ENCODE measurements at regions of chr11 and their contacts with region 1.

Region 1: GRCh38 chr11:128172046-128172878 is 415.1 kb downstream of the ETS1 start:
- DNase-seq: peak; percentile 74
- ATAC-seq: peak; percentile 85
- H3K4me3 ChIP-seq: no peak overlapping the region
- H3K27ac ChIP-seq: no peak overlapping the region
- H3K4me1 ChIP-seq: no peaks in the 10 kb centered on the region
- H3K27me3 ChIP-seq: peaks cover 15% of the 10 kb centered on the region
- CTCF ChIP-seq: peak; percentile 65 to 83 (median 77)
- POLR2A ChIP-seq: no peak
- RAD21 ChIP-seq: peak; percentile 91

Region 2: GRCh38 chr11:128157423-128158298 is 14.6 kb before region 1 on chr11:
- CTCF ChIA-PET with region 1: interaction called, 53 read pairs
- POLR2A ChIA-PET with region 1: no interaction called
- RAD21 ChIA-PET with region 1: interaction called in 1 of 2 experiments, 4 read pairs
- intact Hi-C with region 1: no loop called
- DNase-seq: peak; percentile 72
- ATAC-seq: peak; percentile 90
- H3K4me3 ChIP-seq: no peak overlapping the region
- H3K27ac ChIP-seq: no peak overlapping the region
- H3K4me1 ChIP-seq: no peaks in the 10 kb centered on the region; a peak in 1 of 4 replicates
- H3K27me3 ChIP-seq: peaks cover 18% of the 10 kb centered on the region; the same call in 1 of the 2 replicates
- CTCF ChIP-seq: peak; percentile 73 to 99 (median 94)
- POLR2A ChIP-seq: no peak
- RAD21 ChIP-seq: peak; percentile 78

Region 3: DNA sequence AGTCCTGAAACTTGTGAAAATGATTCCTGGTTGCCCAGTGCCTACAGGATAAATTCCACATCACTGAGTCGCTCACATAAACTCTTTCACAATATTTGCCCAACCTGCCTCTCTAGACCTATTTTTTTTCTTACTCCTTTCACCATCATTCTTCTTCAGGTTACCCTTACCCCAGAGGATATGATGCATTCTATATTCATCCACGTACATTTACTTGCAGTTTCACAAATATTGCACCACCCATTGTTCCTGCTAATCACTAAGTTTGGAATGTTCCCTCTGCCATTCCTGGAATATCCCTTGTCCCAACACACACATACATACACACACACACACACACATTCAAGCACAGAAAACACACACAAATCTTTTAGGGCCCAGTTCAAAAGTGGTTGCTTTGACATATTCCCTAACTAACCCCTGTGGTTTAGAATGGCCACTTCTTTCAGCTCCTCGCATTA is 35.6 kb after region 1 on chr11:
- CTCF ChIA-PET with region 1: no interaction called
- POLR2A ChIA-PET with region 1: no interaction called
- RAD21 ChIA-PET with region 1: no interaction called
- intact Hi-C with region 1: no loop called
- DNase-seq: peak; percentile 77
- ATAC-seq: peak; percentile 35
- H3K4me3 ChIP-seq: peak overlapping the region in 1 of 2 experiments; percentile 17; a peak in 1 of 4 replicates
- H3K27ac ChIP-seq: no peak overlapping the region
- H3K4me1 ChIP-seq: peaks cover 38 to 51% of the 10 kb centered on the region in 2 experiments
- H3K27me3 ChIP-seq: no peaks in the 10 kb centered on the region
- CTCF ChIP-seq: no peak
- POLR2A ChIP-seq: no peak
- RAD21 ChIP-seq: peak; percentile 21; the same call in 1 of the 2 replicates

Region 4: GRCh38 chr11:128238521-128239265 is 66.4 kb after region 1 on chr11:
- CTCF ChIA-PET with region 1: no interaction called
- POLR2A ChIA-PET with region 1: no interaction called
- RAD21 ChIA-PET with region 1: no interaction called
- intact Hi-C with region 1: no loop called
- DNase-seq: no peak
- ATAC-seq: no peak
- H3K4me3 ChIP-seq: no peak overlapping the region
- H3K27ac ChIP-seq: no peak overlapping the region
- H3K4me1 ChIP-seq: no peaks in the 10 kb centered on the region
- H3K27me3 ChIP-seq: no peaks in the 10 kb centered on the region
- CTCF ChIP-seq: no peak
- POLR2A ChIP-seq: no peak
- RAD21 ChIP-seq: no peak

Region 5: GRCh38 chr11:128630367-128631230 is 458.3 kb after region 1 on chr11:
- CTCF ChIA-PET with region 1: interaction called, 80 read pairs
- POLR2A ChIA-PET with region 1: no interaction called
- RAD21 ChIA-PET with region 1: interaction called, 3 to 4 read pairs
- intact Hi-C with region 1: loop called (anchors 1 kb)
- DNase-seq: peak; percentile 56
- ATAC-seq: peak; percentile 87
- H3K4me3 ChIP-seq: no peak overlapping the region
- H3K27ac ChIP-seq: no peak overlapping the region
- H3K4me1 ChIP-seq: no peaks in the 10 kb centered on the region
- H3K27me3 ChIP-seq: no peaks in the 10 kb centered on the region; the same call in 1 of the 2 replicates
- CTCF ChIP-seq: peak; percentile 79 to 95 (median 89)
- POLR2A ChIP-seq: no peak
- RAD21 ChIP-seq: peak; percentile 93

Region 6: DNA sequence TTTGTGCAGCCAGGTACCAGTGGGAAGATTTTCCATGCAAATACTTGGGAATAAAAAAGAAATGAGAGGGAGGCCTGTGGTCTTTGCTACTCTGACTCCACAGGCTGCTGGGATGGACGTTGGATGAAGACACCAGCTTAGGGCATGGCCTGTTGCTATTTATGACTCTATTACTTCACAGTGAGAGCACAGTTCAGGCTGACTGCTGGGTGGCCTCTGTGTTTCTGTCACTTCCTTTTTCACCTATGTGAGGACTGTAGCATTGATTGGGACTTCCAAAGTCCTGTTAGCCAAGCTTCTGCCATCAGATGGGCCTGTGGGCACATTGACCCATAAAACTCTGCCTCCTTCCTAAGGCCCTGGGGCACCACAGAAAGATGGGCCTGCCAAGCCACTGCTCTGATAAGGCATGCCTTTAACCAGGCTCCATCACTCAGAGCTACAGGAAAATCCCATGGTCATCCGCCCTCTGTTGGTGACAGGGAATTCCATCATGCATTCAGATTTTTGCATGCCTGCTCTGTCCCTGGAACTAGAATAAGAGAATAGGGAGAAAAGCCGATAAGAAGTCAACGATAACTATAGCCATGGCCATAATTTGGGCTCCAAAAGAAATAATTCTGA is 630.2 kb after region 1 on chr11:
- CTCF ChIA-PET with region 1: interaction called, 10 read pairs
- POLR2A ChIA-PET with region 1: no interaction called
- RAD21 ChIA-PET with region 1: no interaction called
- intact Hi-C with region 1: no loop called
- DNase-seq: peak; percentile 21
- ATAC-seq: peak; percentile 90
- H3K4me3 ChIP-seq: no peak overlapping the region
- H3K27ac ChIP-seq: no peak overlapping the region
- H3K4me1 ChIP-seq: no peaks in the 10 kb centered on the region
- H3K27me3 ChIP-seq: peaks cover 36% of the 10 kb centered on the region
- CTCF ChIP-seq: peak; percentile 38 to 69 (median 68); a peak in 5 of 6 replicates
- POLR2A ChIP-seq: no peak
- RAD21 ChIP-seq: peak; percentile 38; the same call in 1 of the 2 replicates

Region 7: DNA sequence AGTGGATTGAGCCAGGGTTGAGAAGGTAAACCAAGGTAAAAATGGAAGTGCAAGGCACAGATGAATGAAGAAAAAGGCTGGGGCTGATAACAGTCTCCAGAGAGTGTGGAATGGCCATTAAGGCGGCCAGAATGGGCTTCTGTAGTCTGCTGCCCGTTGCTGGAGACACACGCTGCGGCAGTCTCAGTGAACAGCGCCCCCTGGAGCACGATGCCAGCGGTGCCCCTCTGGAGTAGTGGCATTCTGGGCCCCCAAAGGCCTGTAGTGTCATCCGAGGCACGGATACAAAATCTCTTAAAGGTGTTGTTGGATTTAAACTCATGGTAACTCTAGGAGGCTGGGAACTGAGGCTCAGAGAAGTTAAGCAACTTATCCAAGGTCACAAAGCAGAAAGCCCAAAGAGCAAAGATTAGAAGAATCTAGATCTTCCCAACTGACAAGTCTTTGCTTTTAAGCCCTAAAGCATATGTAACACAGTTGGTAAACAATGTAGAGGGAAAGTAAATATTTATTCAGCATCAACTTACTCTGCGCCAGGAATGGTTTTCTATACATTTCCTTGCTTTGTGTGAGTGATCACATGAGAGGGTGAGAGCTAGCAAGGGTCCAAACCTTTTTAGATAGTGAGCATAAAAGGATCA is 676.7 kb after region 1 on chr11:
- CTCF ChIA-PET with region 1: no interaction called
- POLR2A ChIA-PET with region 1: no interaction called
- RAD21 ChIA-PET with region 1: no interaction called
- intact Hi-C with region 1: loop called (anchors 5 kb)
- DNase-seq: peak; percentile 49
- ATAC-seq: peak; percentile 100
- H3K4me3 ChIP-seq: no peak overlapping the region
- H3K27ac ChIP-seq: no peak overlapping the region
- H3K4me1 ChIP-seq: no peaks in the 10 kb centered on the region
- H3K27me3 ChIP-seq: peaks cover 17% of the 10 kb centered on the region
- CTCF ChIP-seq: peak; percentile 67 to 98 (median 97)
- POLR2A ChIP-seq: no peak
- RAD21 ChIP-seq: peak; percentile 65

Region 8: GRCh38 chr11:128956401-128957201 is 784.3 kb after region 1 on chr11:
- CTCF ChIA-PET with region 1: interaction called, 7 read pairs
- POLR2A ChIA-PET with region 1: no interaction called
- RAD21 ChIA-PET with region 1: no interaction called
- intact Hi-C with region 1: loop called (anchors 10 kb)
- DNase-seq: peak; percentile 73
- ATAC-seq: peak; percentile 94
- H3K4me3 ChIP-seq: no peak overlapping the region
- H3K27ac ChIP-seq: no peak overlapping the region
- H3K4me1 ChIP-seq: no peaks in the 10 kb centered on the region
- H3K27me3 ChIP-seq: no peaks in the 10 kb centered on the region
- CTCF ChIP-seq: peak; percentile 58 to 95 (median 76)
- POLR2A ChIP-seq: no peak
- RAD21 ChIP-seq: peak; percentile 94

Measured in HCT116 (cell line).